ENCODE measurements at regions of chr3 and their contacts with region 1.

Region 1: GRCh38 chr3:177041021-177041729 is 156.1 kb downstream of the TBL1XR1 start:
- DNase-seq: peak; percentile 57 to 61
- ATAC-seq: peak; percentile 78 to 87
- H3K4me3 ChIP-seq: no peak overlapping the region
- H3K27ac ChIP-seq: peak overlapping the region; percentile 53 to 70 (median 62)
- H3K4me1 ChIP-seq: peaks cover 41 to 42% of the 10 kb centered on the region in 2 donors
- H3K27me3 ChIP-seq: no peaks in the 10 kb centered on the region
- CTCF ChIP-seq: no peak
- POLR2A ChIP-seq: no peak

Region 2: DNA sequence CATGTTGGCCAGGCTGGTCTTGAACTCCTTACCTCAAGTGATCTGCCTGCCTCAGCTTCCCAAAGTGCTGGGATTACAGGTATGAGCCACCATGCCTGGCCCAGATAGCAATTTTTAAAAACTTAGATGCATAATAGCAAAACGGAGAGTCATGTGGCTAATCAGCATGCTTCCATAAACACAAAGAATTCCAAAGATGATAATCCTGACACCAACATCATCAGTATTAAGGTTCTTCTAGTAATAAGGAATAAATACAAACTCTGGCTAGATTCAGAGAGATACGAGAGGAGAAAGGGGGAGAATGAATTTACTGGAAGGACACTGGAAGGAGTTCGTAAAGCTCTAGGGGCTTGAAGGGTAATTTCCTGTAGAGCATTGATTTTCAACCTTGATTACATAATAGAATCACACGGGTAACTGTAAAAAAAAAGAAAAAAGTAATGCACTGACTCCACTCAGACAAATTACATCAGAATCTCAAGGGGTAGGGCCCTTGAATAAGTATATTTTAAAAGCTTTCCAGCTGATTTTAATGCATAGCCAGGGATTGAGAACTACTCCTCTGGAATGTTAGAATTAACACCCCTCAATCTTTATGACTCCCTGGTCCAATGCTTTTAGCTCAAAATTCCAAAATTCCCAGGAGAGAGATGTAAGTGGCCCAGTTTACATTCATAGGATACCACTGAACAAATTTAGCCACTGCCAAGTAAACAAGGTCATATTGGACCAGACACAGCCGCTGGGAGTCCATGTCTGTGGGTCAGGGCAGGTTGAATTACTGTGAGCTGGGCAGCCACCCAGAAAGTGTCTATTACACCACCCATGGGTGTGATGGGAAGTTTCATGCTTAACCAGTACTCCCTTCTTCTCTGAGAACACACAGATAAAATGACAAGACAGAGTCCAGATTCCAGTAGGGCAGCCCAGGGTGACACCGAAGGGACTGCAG is 87.8 kb before region 1 on chr3:
- in situ Hi-C with region 1: no loop called
- intact Hi-C with region 1: loop called (anchors 5 kb)
- DNase-seq: peak; percentile 87 to 93
- ATAC-seq: peak; percentile 84 to 86
- H3K4me3 ChIP-seq: no peak overlapping the region
- H3K27ac ChIP-seq: peak overlapping the region; percentile 53 to 80 (median 68)
- H3K4me1 ChIP-seq: peaks cover 42% of the 10 kb centered on the region in 2 donors
- H3K27me3 ChIP-seq: no peaks in the 10 kb centered on the region
- CTCF ChIP-seq: no peak
- POLR2A ChIP-seq: no peak

Region 3: GRCh38 chr3:177294221-177294620 is 253.0 kb after region 1 on chr3:
- in situ Hi-C with region 1: no loop called
- intact Hi-C with region 1: loop called (anchors 5 kb)
- DNase-seq: peak; percentile 82 to 85
- ATAC-seq: peak; percentile 99 to 100
- H3K4me3 ChIP-seq: no peak overlapping the region
- H3K27ac ChIP-seq: peak overlapping the region; percentile 69 to 91 (median 80)
- H3K4me1 ChIP-seq: peaks cover 22 to 31% of the 10 kb centered on the region in 2 donors
- H3K27me3 ChIP-seq: no peaks in the 10 kb centered on the region
- CTCF ChIP-seq: no peak
- POLR2A ChIP-seq: no peak

Region 4: DNA sequence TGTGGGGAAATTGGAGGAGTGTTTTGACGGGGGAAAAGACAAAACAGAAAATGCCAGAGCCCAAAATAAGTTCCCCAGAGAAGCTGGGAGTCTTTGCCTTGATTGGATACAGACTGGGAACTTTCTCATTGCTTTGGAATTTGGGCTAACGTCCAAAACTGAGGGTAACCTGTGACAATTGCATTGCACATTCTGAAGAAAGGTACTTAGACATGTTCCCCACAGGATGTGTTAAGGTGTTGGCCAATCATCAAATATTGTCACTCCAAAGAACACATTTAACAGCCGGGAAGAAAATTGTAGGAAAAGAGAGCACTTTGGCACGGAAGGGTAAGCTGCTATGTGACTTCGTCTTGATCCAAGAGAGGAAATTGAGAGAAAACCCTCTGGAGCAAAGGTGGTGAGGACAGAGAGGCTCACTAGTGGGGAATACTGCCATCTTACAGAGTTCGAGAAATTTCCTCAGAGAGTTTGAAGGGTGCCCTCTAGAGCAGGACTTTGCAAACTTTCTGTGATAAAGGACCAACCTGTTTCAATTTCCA is 775.6 kb after region 1 on chr3:
- in situ Hi-C with region 1: no loop called
- intact Hi-C with region 1: loop called (anchors 10 kb)
- DNase-seq: no peak
- ATAC-seq: peak; percentile 57 to 83
- H3K4me3 ChIP-seq: no peak overlapping the region
- H3K27ac ChIP-seq: peak overlapping the region; percentile 18 to 64 (median 54)
- H3K4me1 ChIP-seq: peaks cover 19 to 36% of the 10 kb centered on the region in 2 donors
- H3K27me3 ChIP-seq: no peaks in the 10 kb centered on the region
- CTCF ChIP-seq: peak in 1 of 5 experiments; percentile 11
- POLR2A ChIP-seq: no peak

Region 5: GRCh38 chr3:178385280-178385952 is 1344.2 kb after region 1 on chr3:
- in situ Hi-C with region 1: loop called in 2 of 4 experiments (anchors 25 kb)
- intact Hi-C with region 1: no loop called
- DNase-seq: no peak
- ATAC-seq: peak; percentile 47 to 80
- H3K4me3 ChIP-seq: no peak overlapping the region
- H3K27ac ChIP-seq: no peak overlapping the region
- H3K4me1 ChIP-seq: peaks cover 0 to 24% of the 10 kb centered on the region in 2 donors
- H3K27me3 ChIP-seq: no peaks in the 10 kb centered on the region
- CTCF ChIP-seq: peak; percentile 58 to 87 (median 80)
- POLR2A ChIP-seq: no peak